Ovary (tissue), 10 donors: ENCODE measurements at regions of chr11 and their contacts with region 1.

Region 1: GRCh38 chr11:62831520-62832335 is at the start of gene STX5:
- DNase-seq: peak; percentile 99 to 100 (median 100)
- H3K4me3 ChIP-seq: peak within 1 kb of the TSS; percentile 96
- H3K27ac ChIP-seq: peak within 1 kb of the TSS; percentile 90 to 96
- H3K4me1 ChIP-seq: peaks cover 9% of the 10 kb centered on the region
- H3K27me3 ChIP-seq: no peaks in the 10 kb centered on the region
- CTCF ChIP-seq: peak in 1 of 3 donors; percentile 25
- EP300 ChIP-seq: no peak
- POLR2A ChIP-seq: peak; percentile 96
- total RNA-seq, gene STX5: 33.2 to 60.7 (median 49.1) TPM

Region 2: DNA sequence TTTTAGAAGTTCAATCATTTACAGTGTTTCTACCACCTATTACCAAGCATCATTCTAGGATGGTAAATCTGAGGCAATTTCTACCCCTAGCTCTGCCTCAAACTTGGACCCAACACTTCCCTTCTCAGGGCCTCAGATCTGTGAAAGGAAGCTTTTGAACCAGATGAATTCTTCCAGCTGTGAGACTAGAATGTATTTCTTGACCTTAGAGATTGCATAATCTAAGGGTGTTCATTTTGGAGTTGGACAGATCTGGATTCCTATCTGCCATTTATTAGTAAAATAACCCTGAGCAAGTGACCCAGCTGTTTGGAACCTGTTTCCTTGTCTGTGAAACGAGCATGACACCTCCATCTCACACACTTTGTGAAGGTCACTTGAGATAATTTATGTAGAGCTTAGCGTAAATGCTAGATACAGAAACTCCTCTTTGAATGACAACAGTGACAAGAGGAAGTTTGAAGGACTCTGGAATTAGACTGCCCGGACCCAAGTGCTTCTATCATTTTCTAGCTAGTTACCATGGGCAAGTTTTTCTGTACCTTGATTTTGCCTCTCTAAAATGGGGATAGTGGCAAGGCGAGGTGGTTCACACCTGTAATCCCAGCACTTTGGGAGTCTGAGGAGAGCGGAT is 174.8 kb before region 1 on chr11:
- intact Hi-C with region 1: no loop called
- DNase-seq: no peak
- H3K4me3 ChIP-seq: no peak overlapping the region
- H3K27ac ChIP-seq: no peak overlapping the region
- H3K4me1 ChIP-seq: peaks cover 3% of the 10 kb centered on the region
- H3K27me3 ChIP-seq: no peaks in the 10 kb centered on the region
- CTCF ChIP-seq: no peak
- EP300 ChIP-seq: no peak
- POLR2A ChIP-seq: no peak

Region 3: GRCh38 chr11:62787005-62787759 is 44.5 kb before region 1 on chr11 and contains the start of gene TMEM179B:
- intact Hi-C with region 1: loop called in 2 of 4 experiments (anchors 2 to 5 kb)
- DNase-seq: peak; percentile 96 to 99 (median 98)
- H3K4me3 ChIP-seq: peak within 1 kb of the TSS; percentile 58
- H3K27ac ChIP-seq: peak within 1 kb of the TSS; percentile 89 to 94
- H3K4me1 ChIP-seq: no peaks in the 10 kb centered on the region
- H3K27me3 ChIP-seq: no peaks in the 10 kb centered on the region
- CTCF ChIP-seq: peak; percentile 13 to 57 (median 57)
- EP300 ChIP-seq: no peak
- POLR2A ChIP-seq: peak; percentile 91
- total RNA-seq, gene TMEM179B: 32.7 to 101 (median 36.5) TPM

Region 4: DNA sequence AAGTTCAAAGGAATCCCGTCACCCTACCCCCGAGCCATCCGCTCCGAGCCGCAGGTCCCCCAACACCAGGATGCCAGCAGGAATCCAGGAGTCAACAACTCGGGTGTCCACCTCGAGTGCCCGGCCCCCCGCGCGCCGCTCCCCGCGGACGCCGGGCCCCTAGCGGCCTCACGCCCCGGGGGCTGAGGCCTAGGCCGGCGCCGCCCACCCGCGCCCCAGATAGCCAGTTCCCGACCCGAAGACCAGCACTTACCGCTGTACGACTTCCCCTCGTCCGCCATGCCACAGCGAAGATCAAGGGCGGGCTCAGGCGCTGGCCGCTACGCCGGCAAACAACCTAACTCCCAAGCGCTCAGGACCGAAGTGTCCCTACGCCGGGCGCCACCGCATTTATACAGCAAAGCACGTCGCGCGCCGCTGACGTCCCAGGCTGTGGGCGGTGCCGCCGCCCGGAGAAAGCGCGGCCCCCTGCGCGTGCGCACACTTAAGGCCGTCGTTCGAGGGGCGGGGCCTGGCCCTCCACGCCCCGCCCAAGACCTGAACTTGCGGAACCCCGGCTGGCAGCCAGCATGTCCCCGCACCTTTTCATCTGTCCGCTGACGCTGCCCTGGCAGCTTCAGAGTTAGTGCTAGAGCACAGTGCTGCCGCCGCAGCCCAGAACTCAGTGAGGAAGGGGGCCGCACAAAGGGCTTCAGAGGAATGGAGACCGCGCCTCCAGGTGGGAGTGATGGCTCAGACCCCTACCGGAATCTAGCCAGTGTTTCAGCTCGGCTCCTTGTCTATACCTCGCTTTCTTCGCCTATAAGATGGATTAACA is 26.4 kb before region 1 on chr11 and contains the start of gene NXF1:
- intact Hi-C with region 1: loop called in 1 of 4 experiments (anchors 2 kb)
- DNase-seq: peak; percentile 93 to 98 (median 97)
- H3K4me3 ChIP-seq: peak within 1 kb of the TSS; percentile 82
- H3K27ac ChIP-seq: peak within 1 kb of the TSS; percentile 40 to 80
- H3K4me1 ChIP-seq: peaks cover 6% of the 10 kb centered on the region
- H3K27me3 ChIP-seq: no peaks in the 10 kb centered on the region
- CTCF ChIP-seq: peak in 2 of 3 donors; percentile 53 to 56
- EP300 ChIP-seq: peak; percentile 43
- POLR2A ChIP-seq: peak; percentile 99
- total RNA-seq, gene NXF1: 48.8 to 96.8 (median 77.7) TPM